ENCODE measurements at regions of chr19 and their contacts with region 1.

Region 1: GRCh38 chr19:15280915-15281683 is 48.9 kb upstream of the EPHX3 start:
- DNase-seq: peak; percentile 94
- H3K4me3 ChIP-seq: no peak overlapping the region
- H3K27ac ChIP-seq: peak overlapping the region; percentile 47 to 78 (median 76)
- H3K4me1 ChIP-seq: peaks cover 0 to 100% (median 99%) of the 10 kb centered on the region in 4 donors
- H3K27me3 ChIP-seq: no peaks in the 10 kb centered on the region
- CTCF ChIP-seq: no peak
- EP300 ChIP-seq: no peak
- POLR2A ChIP-seq: no peak

Region 2: GRCh38 chr19:15222738-15223648 is 58.1 kb before region 1 on chr19:
- intact Hi-C with region 1: no loop called
- DNase-seq: peak; percentile 96
- H3K4me3 ChIP-seq: peak overlapping the region; percentile 60 to 71 (median 66)
- H3K27ac ChIP-seq: peak overlapping the region; percentile 44 to 70 (median 60)
- H3K4me1 ChIP-seq: peaks cover 0 to 14% (median 10%) of the 10 kb centered on the region in 4 donors
- H3K27me3 ChIP-seq: no peaks in the 10 kb centered on the region
- CTCF ChIP-seq: no peak
- EP300 ChIP-seq: no peak
- POLR2A ChIP-seq: no peak

Region 3: GRCh38 chr19:15297416-15298224 is 16.5 kb after region 1 on chr19:
- intact Hi-C with region 1: loop called (anchors 2 kb)
- DNase-seq: no peak
- H3K4me3 ChIP-seq: peak overlapping the region in 2 of 4 donors; percentile 1 to 13
- H3K27ac ChIP-seq: peak overlapping the region; percentile 62 to 84 (median 74)
- H3K4me1 ChIP-seq: peaks cover 0 to 99% (median 98%) of the 10 kb centered on the region in 4 donors
- H3K27me3 ChIP-seq: no peaks in the 10 kb centered on the region
- CTCF ChIP-seq: no peak
- EP300 ChIP-seq: peak in 1 of 4 donors; percentile 39
- POLR2A ChIP-seq: no peak

Region 4: GRCh38 chr19:15303105-15303780 is 22.1 kb after region 1 on chr19:
- intact Hi-C with region 1: loop called (anchors 1 kb)
- DNase-seq: no peak
- H3K4me3 ChIP-seq: no peak overlapping the region
- H3K27ac ChIP-seq: peak overlapping the region; percentile 48 to 83 (median 72)
- H3K4me1 ChIP-seq: peaks cover 0 to 92% (median 82%) of the 10 kb centered on the region in 4 donors
- H3K27me3 ChIP-seq: no peaks in the 10 kb centered on the region
- CTCF ChIP-seq: no peak
- EP300 ChIP-seq: no peak
- POLR2A ChIP-seq: no peak

Measured in sigmoid colon (tissue), 7 donors.